ENCODE measurements at regions of chr17 and their contacts with region 1.

Region 1: DNA sequence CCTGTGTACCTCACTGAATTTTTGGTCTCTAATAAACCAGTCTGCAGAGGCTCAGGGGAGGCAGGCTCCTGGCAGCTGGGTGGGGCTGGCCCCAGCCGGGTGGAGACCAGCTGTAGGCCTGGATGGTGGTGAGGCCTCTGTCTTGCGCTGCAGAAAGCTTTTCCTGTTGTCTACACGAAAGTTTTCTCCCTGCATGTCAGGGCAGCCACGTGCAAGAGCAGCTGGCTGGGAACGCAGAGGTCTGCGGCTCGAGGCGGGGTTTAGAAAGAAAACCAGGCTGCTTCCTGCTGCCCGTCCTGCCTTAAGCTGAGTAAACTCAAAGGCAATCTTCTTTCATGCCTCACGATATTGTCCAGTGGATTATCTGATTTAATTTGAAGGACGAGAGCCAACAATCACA is 2.4 kb downstream of the SERPINF1 start:
- DNase-seq: no peak
- H3K4me3 ChIP-seq: no peak overlapping the region
- H3K27ac ChIP-seq: no peak overlapping the region
- H3K4me1 ChIP-seq: peaks cover 0 to 25% (median 21%) of the 10 kb centered on the region in 4 experiments; a peak in 6 of 7 replicates
- H3K27me3 ChIP-seq: no peaks in the 10 kb centered on the region; a peak in 2 of 7 replicates
- CTCF ChIP-seq: no peak
- EP300 ChIP-seq: no peak
- POLR2A ChIP-seq: no peak
- RAD21 ChIP-seq: no peak

Region 2: DNA sequence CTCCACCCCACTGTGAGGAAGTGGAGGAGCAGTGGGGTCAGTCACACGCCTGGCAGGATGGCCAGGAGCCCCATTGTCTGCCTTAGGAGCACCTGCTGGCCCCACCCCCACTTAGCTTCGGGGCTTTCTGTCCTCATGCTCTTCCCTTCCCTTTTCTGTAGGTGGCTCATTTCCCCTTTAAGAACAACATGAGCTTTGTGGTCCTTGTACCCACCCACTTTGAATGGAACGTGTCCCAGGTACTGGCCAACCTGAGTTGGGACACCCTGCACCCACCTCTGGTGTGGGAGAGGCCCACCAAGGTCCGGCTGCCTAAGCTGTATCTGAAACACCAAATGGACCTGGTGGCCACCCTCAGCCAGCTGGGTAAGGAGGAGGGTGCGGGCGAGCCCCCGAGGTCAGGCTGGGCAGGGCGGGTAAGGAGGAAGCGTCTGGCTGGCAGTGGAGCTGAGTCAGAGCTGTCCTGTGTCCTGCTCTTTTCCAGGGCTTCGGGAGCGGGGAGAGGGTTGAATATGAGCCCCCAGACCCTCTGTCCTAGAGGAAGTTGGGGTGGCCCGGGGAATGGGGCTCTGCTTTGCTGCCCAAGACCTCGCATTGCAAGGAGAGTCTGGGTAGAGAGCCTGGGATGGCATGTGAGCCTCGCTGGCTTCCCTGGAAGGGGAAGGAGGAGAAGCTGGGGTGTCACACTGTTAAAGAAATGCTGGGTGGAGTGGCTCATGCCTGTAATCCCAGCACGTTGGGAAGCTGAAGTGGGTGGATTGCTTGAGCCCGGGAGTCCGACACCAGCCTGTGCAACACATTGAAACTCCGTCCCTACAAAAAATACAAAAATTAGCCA is 11.6 kb before region 1 on chr17:
- CTCF ChIA-PET with region 1: interaction called, 29 read pairs
- POLR2A ChIA-PET with region 1: interaction called, 18 read pairs
- DNase-seq: no peak
- H3K4me3 ChIP-seq: peak overlapping the region in 1 of 4 experiments; percentile 33; a peak in 1 of 8 replicates
- H3K27ac ChIP-seq: no peak overlapping the region
- H3K4me1 ChIP-seq: peaks cover 0 to 16% (median 11%) of the 10 kb centered on the region in 4 experiments; a peak in 6 of 7 replicates
- H3K27me3 ChIP-seq: no peaks in the 10 kb centered on the region
- CTCF ChIP-seq: no peak
- EP300 ChIP-seq: no peak
- POLR2A ChIP-seq: no peak
- RAD21 ChIP-seq: no peak

Region 3: DNA sequence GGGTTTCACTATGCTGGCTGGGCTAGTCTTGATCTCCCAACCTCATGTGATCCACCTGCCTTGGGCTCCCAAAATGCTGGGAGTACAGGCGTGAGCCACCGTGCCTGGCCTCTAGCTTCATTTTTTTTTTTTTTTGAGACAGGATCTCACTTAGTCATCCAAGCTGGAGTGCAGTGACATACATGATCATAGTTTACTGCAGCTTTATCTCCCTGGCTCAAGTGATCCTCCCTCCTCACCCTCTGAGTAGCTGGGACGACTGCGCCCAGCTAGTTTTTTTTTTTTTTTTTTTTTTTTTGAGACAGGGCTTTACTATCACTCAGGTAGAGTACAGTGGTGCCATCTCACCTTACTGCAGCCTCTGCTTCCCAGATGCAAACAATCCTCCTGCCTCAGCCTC is 75.2 kb after region 1 on chr17:
- CTCF ChIA-PET with region 1: no interaction called
- POLR2A ChIA-PET with region 1: no interaction called
- DNase-seq: no peak
- H3K4me3 ChIP-seq: no peak overlapping the region
- H3K27ac ChIP-seq: no peak overlapping the region
- H3K4me1 ChIP-seq: no peaks in the 10 kb centered on the region
- H3K27me3 ChIP-seq: no peaks in the 10 kb centered on the region
- CTCF ChIP-seq: no peak
- EP300 ChIP-seq: no peak
- POLR2A ChIP-seq: no peak
- RAD21 ChIP-seq: no peak

Region 4: GRCh38 chr17:1939981-1940809 is 175.9 kb after region 1 on chr17:
- CTCF ChIA-PET with region 1: no interaction called
- POLR2A ChIA-PET with region 1: no interaction called
- DNase-seq: no peak
- H3K4me3 ChIP-seq: no peak overlapping the region
- H3K27ac ChIP-seq: no peak overlapping the region
- H3K4me1 ChIP-seq: no peaks in the 10 kb centered on the region
- H3K27me3 ChIP-seq: no peaks in the 10 kb centered on the region; a peak in 1 of 7 replicates
- CTCF ChIP-seq: no peak
- EP300 ChIP-seq: no peak
- POLR2A ChIP-seq: no peak
- RAD21 ChIP-seq: no peak

Measured in H1 (cell line).